ENCODE measurements at regions of chr2 and their contacts with region 1.

Region 1: GRCh38 chr2:70086838-70087701 is at the start of gene PCBP1:
- DNase-seq: peak; percentile 97 to 99 (median 98)
- H3K4me3 ChIP-seq: peak within 1 kb of the TSS; percentile 61
- H3K27ac ChIP-seq: peak within 1 kb of the TSS; percentile 99 to 100
- H3K4me1 ChIP-seq: peaks cover 10% of the 10 kb centered on the region
- H3K27me3 ChIP-seq: no peaks in the 10 kb centered on the region
- CTCF ChIP-seq: peak in 1 of 3 donors; percentile 10
- EP300 ChIP-seq: peak; percentile 56
- POLR2A ChIP-seq: peak; percentile 89
- total RNA-seq, gene PCBP1: 77.1 to 302 (median 267) TPM

Region 2: GRCh38 chr2:69914170-69914960 is 172.7 kb before region 1 on chr2:
- intact Hi-C with region 1: loop called in 3 of 4 experiments (anchors 5 to 10 kb)
- DNase-seq: peak; percentile 99 to 100 (median 100)
- H3K4me3 ChIP-seq: peak overlapping the region; percentile 75
- H3K27ac ChIP-seq: peak overlapping the region; percentile 92 to 98
- H3K4me1 ChIP-seq: peaks cover 2% of the 10 kb centered on the region
- H3K27me3 ChIP-seq: no peaks in the 10 kb centered on the region
- CTCF ChIP-seq: peak; percentile 12 to 58 (median 40)
- EP300 ChIP-seq: no peak
- POLR2A ChIP-seq: peak; percentile 93

Region 3: DNA sequence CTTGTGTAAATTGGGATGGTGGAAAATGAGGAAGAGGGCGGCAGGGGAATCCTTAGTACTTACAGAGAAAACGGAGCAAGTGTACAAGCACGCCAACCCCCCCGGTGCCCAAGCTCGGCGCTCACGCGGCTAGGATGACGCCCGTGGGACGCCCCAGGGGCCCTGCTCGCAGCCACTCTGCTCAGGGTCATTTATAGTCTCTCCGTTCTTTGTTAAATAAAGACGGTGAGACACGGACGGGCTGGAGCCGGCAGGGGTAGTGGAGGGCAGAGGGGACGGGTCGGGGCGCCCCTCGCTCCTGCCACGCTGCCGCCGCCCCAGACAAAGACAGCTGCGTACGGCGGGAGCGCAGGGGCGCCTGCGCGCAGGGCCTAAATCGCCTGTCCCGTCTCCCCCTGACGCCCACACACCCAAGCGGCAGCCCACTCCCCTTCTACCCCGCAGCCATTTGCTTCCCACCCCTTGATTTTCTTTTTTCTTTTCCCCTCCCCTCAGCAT is 38.0 kb after region 1 on chr2:
- intact Hi-C with region 1: loop called (anchors 2 to 5 kb)
- DNase-seq: peak; percentile 68 to 83 (median 77)
- H3K4me3 ChIP-seq: peak overlapping the region; percentile 76
- H3K27ac ChIP-seq: peak overlapping the region; percentile 96 to 97
- H3K4me1 ChIP-seq: peaks cover 4% of the 10 kb centered on the region
- H3K27me3 ChIP-seq: no peaks in the 10 kb centered on the region
- CTCF ChIP-seq: no peak
- EP300 ChIP-seq: no peak
- POLR2A ChIP-seq: no peak

Region 4: DNA sequence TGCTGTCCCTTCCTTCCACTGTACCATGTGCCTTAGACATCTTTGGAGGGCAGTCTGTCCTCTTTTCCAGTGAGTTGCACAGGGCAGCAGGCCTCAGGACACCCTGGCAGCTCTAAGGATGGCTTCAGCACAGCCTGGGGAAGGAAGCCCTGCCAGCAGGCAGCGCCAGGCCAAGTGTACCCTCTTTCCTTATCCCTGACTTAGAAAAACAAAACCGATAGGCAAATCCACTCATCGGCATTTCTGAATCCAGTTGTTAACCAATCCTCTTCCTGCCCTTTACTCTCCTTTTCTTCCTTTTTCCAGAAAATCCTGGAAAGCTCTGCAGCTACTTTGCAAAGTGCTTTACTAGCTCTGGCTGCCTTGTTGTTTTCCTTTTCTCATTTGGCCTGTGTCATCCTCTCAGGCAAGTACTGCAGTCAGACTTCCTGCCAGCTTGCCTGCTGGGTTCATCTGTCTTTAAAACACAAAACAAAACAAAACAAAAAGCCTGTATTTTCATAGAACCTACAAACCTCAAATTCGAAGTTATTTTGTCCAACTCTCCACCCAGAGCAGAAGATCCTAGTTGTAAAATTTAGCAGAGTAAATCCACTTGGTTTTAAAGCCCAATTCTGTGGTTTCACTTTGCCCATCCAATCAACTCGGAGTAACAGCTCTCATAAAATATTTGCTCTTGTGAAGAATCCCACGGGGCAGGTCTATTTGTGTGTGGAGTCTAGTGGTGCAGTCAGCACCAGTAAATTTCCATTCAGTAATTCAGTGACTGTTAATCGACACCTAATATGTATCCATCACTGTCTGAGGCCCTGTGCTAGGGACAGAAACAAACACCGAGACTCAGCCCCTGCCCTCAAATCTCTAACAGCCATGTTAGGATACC is 45.4 kb after region 1 on chr2:
- intact Hi-C with region 1: loop called in 2 of 4 experiments (anchors 2 to 5 kb)
- DNase-seq: peak; percentile 38 to 51 (median 49)
- H3K4me3 ChIP-seq: peak overlapping the region; percentile 31
- H3K27ac ChIP-seq: peak overlapping the region; percentile 42 to 86
- H3K4me1 ChIP-seq: peaks cover 6% of the 10 kb centered on the region
- H3K27me3 ChIP-seq: no peaks in the 10 kb centered on the region
- CTCF ChIP-seq: no peak
- EP300 ChIP-seq: no peak
- POLR2A ChIP-seq: no peak

Region 5: GRCh38 chr2:70137519-70137918 is 50.4 kb after region 1 on chr2:
- intact Hi-C with region 1: loop called (anchors 1 to 5 kb)
- DNase-seq: no peak
- H3K4me3 ChIP-seq: no peak overlapping the region
- H3K27ac ChIP-seq: no peak overlapping the region
- H3K4me1 ChIP-seq: peaks cover 11% of the 10 kb centered on the region
- H3K27me3 ChIP-seq: no peaks in the 10 kb centered on the region
- CTCF ChIP-seq: no peak
- EP300 ChIP-seq: no peak
- POLR2A ChIP-seq: no peak

Region 6: DNA sequence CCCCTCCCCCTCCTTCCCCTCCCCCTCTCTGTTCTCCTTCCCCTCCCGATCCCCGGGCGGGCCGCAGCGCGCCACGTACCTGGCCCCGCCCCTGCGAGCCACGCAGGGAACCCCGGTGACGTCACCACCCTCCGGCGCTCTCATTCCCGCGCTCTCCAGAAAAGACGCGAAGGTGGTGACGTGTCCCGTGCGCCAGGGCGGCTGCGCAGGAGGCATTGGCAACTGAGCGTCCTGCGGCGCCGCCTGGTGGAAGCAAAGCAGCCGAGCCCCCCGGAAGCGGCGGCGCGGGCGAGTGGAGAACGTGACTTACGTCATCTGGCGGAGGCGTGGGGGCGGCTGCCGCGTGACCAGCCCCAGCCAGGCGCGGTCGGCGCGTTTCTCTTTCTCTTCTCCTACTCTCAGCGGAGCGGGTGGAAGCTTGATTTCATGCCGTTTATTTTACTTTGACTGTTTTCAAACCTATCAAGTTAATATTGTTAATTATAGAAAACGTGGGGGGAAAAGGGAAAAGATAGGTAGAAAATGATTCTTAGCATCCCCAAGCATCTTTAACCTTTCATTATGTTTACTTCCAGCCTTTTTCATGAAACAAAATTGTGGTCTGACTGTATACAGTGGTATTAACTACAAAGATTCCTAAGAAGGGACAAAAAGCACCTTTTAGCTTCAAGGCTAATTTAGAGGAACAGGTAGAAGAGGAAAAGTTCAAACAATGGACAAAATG is 55.7 kb after region 1 on chr2:
- intact Hi-C with region 1: loop called in 3 of 4 experiments (anchors 1 to 5 kb)
- DNase-seq: peak; percentile 99 to 100 (median 100)
- H3K4me3 ChIP-seq: peak overlapping the region; percentile 73
- H3K27ac ChIP-seq: peak overlapping the region; percentile 100
- H3K4me1 ChIP-seq: peaks cover 13% of the 10 kb centered on the region
- H3K27me3 ChIP-seq: no peaks in the 10 kb centered on the region
- CTCF ChIP-seq: peak; percentile 87 to 100 (median 100)
- EP300 ChIP-seq: peak; percentile 96
- POLR2A ChIP-seq: peak; percentile 93

Region 7: DNA sequence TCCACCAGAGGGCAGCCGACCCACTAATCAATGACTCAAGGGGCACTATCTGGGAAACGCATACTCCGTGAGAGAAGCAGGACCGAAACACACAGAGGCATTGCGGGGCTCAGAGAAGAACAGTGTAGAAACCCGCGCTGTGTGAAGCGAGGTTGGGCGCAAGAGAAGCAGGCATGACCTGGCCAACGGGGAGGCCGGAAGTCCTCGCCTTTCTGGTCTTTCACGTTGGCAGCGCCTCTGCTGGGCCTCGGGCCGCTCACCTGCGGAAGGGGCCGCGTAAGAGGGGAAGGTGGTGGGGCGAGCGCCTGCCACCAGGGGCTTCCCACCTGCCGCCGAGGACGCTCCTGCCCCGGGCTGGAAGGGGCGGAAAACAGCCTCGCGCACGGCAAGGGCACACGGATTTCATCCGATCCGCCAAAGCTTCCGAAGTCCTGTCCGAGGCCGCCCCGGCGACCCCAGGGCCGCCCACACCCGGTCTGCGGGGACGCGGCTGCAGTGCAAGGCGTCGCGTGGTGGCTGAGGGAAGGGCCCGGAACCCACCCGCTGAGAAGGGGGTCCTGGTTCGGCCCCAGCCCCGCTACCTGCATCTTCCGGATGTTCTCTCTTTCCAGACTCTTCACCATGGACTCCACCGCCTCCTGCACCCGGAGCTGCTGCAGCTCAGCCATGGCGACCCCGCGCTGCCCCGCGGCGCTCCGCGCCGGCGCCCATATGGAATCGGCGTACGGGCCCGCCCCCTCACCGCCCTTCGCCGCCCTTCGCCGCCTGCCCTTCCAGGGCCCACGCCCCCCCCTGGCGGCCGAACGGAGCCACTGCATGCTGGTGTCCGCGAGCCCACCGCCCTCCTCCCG is 214.5 kb after region 1 on chr2 and contains the start of gene FAM136A:
- intact Hi-C with region 1: loop called in 1 of 4 experiments (anchors 10 kb)
- DNase-seq: peak; percentile 81 to 92 (median 88)
- H3K4me3 ChIP-seq: peak within 1 kb of the TSS; percentile 82
- H3K27ac ChIP-seq: peak within 1 kb of the TSS; percentile 52 to 75
- H3K4me1 ChIP-seq: peaks cover 2% of the 10 kb centered on the region
- H3K27me3 ChIP-seq: no peaks in the 10 kb centered on the region
- CTCF ChIP-seq: peak; percentile 89 to 95 (median 94)
- EP300 ChIP-seq: no peak
- POLR2A ChIP-seq: no peak
- total RNA-seq, gene FAM136A: 10.4 to 23.1 (median 17.2) TPM

Measured in ovary (tissue), 10 donors.